Heart right ventricle (tissue), 16 donors: ENCODE measurements at regions of chr20 and their contacts with region 1.

Region 1: GRCh38 chr20:13009682-13010406 is 1.1 kb downstream of the SPTLC3 start:
- DNase-seq: peak in 1 of 2 donors; percentile 69
- ATAC-seq: peak; percentile 84 to 94 (median 89)
- H3K4me3 ChIP-seq: peak overlapping the region; percentile 1 to 64 (median 50)
- H3K27ac ChIP-seq: peak overlapping the region; percentile 33 to 86 (median 62)
- H3K4me1 ChIP-seq: peaks cover 2 to 37% (median 14%) of the 10 kb centered on the region in 9 donors
- H3K27me3 ChIP-seq: no peaks in the 10 kb centered on the region
- CTCF ChIP-seq: no peak

Region 2: DNA sequence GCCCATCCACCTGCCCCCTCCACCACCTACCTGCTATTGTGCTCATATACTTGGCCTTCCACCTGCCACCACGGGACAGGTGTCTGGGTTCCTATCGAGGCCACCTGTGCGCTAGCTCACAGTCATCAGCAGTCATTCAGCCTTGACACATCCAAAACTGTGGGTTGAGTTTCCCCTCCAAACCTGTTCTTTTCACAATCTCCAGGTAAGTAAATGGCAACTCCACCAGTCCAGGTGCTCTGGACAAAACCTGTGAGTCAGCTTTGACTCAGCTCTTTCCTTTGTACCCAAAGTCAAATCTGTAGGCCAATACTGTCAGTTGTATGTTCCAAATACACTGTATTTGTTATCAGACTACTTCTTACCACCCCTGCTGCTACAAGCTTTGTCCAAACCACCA is 51.5 kb after region 1 on chr20:
- intact Hi-C with region 1: loop called in 1 of 10 experiments (anchors 5 kb)
- DNase-seq: no peak
- ATAC-seq: no peak
- H3K4me3 ChIP-seq: no peak overlapping the region
- H3K27ac ChIP-seq: no peak overlapping the region
- H3K4me1 ChIP-seq: peaks cover 0 to 21% (median 0%) of the 10 kb centered on the region in 9 donors
- H3K27me3 ChIP-seq: no peaks in the 10 kb centered on the region
- CTCF ChIP-seq: no peak